Common myeloid progenitor, CD34-positive (primary cell): ENCODE measurements at regions of chr7 and their contacts with region 1.

Region 1: GRCh38 chr7:154927624-154928143 is 75.2 kb downstream of the PAXIP1 start:
- DNase-seq: peak; percentile 90 to 94 (median 92)
- H3K4me3 ChIP-seq: peak overlapping the region; percentile 43 to 98 (median 86)
- H3K27ac ChIP-seq: peak overlapping the region; percentile 85 to 91
- H3K4me1 ChIP-seq: peaks cover 6 to 17% (median 14%) of the 10 kb centered on the region in 4 experiments
- H3K27me3 ChIP-seq: peaks cover 0 to 4% (median 2%) of the 10 kb centered on the region in 5 experiments

Region 2: DNA sequence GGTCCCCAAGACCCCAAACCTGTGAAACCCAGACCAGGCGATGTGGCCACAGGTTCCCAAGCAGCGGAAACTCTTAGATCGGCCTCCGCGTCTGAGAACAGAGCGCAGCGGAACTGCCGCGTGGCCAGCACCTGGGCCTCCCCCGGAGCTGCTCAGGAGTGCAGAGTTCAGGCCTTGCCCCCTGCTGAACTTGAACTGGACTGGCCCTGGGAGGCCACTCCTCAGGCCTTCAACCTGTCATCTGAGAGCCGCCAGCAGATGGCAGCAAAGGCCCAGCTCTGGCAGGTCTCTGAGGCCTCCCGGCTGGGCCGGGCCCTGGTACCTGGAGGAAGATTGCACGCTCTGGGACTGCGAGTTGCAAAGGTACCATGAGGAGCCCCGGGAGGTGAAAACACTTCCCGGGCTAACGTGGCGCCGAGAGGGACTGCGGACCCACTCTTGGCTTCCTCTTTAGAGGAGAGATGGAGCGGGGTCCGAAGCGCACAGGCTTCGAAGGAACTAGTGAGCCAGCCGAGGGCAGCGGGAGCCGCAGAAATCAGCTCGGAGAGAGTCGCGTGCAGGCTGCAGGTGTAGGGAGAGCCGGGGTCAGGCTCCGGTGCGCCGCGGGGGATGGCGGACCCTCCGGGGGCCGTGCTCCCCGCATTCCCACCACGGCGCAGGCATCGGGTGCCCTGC is 13.9 kb before region 1 on chr7:
- CTCF ChIA-PET with region 1: interaction called, 49 read pairs
- POLR2A ChIA-PET with region 1: no interaction called
- DNase-seq: peak; percentile 65 to 77 (median 73)
- H3K4me3 ChIP-seq: peak overlapping the region in 5 of 7 experiments; percentile 3 to 70 (median 51)
- H3K27ac ChIP-seq: no peak overlapping the region
- H3K4me1 ChIP-seq: peaks cover 0 to 12% (median 5%) of the 10 kb centered on the region in 4 experiments
- H3K27me3 ChIP-seq: peaks cover 0 to 43% (median 16%) of the 10 kb centered on the region in 5 experiments

Region 3: DNA sequence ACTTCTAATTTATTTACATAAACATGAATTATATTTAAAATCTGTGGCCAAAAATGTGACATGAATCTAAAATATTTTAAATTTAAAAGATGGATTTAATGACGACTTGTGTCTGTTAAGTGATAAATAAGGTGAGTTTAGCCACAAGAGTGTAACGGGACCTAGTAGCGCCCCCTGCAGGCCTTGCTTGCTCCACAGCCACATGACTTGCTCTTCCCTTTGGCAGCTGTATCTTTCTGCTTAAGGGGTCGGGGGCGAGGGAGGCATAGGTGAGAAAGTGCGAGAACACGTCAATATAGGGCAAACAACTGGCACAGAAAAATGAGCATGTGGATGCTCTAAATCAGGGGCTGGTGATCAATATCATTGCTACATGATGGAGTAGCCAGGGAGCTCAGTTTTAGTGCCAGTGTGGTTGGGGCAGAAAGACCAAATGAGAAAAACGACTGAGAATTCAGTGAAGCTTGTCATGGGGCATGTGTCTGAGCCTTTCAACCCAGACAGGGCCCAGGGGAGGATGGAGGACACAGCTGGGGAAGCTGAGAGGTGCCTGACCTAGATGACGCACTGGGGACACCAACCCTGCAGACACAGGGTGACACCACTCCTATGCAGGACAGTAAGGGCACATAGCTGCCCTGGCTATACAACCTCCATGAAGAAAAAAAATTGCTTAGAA is 25.5 kb after region 1 on chr7:
- CTCF ChIA-PET with region 1: interaction called, 37 read pairs
- POLR2A ChIA-PET with region 1: no interaction called
- DNase-seq: peak; percentile 57 to 74 (median 67)
- H3K4me3 ChIP-seq: no peak overlapping the region
- H3K27ac ChIP-seq: no peak overlapping the region
- H3K4me1 ChIP-seq: no peaks in the 10 kb centered on the region
- H3K27me3 ChIP-seq: no peaks in the 10 kb centered on the region

Region 4: DNA sequence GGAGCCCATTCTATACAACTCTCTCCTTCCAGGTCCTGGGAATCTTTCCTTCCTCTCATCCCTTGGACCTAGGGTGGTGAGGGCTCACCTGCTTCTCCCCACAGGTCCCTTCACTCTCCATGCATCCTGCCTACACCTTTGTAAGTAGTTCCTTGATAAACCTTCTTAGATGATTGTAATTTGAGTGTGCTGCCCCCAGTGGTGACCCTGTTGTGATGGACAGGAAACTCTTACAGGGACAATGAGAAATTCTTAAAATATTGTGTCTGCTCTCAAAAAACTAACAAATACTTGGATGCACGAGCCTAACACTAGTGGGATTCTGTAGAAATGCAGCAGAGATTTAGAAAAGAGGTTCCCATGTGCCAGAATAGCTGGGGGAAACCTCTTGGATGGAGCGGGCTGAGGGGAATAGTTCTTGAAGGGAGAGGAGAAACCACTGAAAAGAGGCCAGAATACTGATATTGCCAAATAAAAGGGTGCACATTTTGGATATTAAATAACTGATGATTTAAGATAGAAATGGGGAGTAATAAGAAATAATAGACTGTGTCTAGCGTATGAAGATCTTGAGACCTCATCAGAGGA is 82.0 kb after region 1 on chr7:
- CTCF ChIA-PET with region 1: interaction called, 16 read pairs
- POLR2A ChIA-PET with region 1: interaction called, 4 read pairs
- DNase-seq: peak; percentile 25 to 58 (median 49)
- H3K4me3 ChIP-seq: no peak overlapping the region
- H3K27ac ChIP-seq: no peak overlapping the region
- H3K4me1 ChIP-seq: peaks cover 0 to 4% (median under 1%) of the 10 kb centered on the region in 4 experiments
- H3K27me3 ChIP-seq: peaks cover 0 to 2% (median 0%) of the 10 kb centered on the region in 5 experiments

Region 5: GRCh38 chr7:155198901-155199845 is 271.5 kb after region 1 on chr7:
- CTCF ChIA-PET with region 1: no interaction called
- POLR2A ChIA-PET with region 1: no interaction called
- DNase-seq: no peak
- H3K4me3 ChIP-seq: no peak overlapping the region
- H3K27ac ChIP-seq: no peak overlapping the region
- H3K4me1 ChIP-seq: peaks cover 0 to 4% (median 0%) of the 10 kb centered on the region in 4 experiments
- H3K27me3 ChIP-seq: no peaks in the 10 kb centered on the region

Region 6: GRCh38 chr7:155356323-155357105 is 428.8 kb after region 1 on chr7:
- CTCF ChIA-PET with region 1: interaction called, 12 read pairs
- POLR2A ChIA-PET with region 1: no interaction called
- DNase-seq: peak in 1 of 3 donors; percentile 40
- H3K4me3 ChIP-seq: no peak overlapping the region
- H3K27ac ChIP-seq: no peak overlapping the region
- H3K4me1 ChIP-seq: peaks cover 0 to 30% (median 10%) of the 10 kb centered on the region in 4 experiments
- H3K27me3 ChIP-seq: peaks cover 0 to 46% (median 0%) of the 10 kb centered on the region in 5 experiments